A673 (cell line): ENCODE measurements at regions of chr9 and their contacts with region 1.

Region 1: GRCh38 chr9:116149844-116150243 is 3.7 kb upstream of the PAPPA start:
- DNase-seq: peak; percentile 79
- H3K4me3 ChIP-seq: no peak overlapping the region
- H3K27ac ChIP-seq: peak overlapping the region; percentile 39
- H3K4me1 ChIP-seq: peaks cover 74% of the 10 kb centered on the region
- H3K27me3 ChIP-seq: no peaks in the 10 kb centered on the region
- CTCF ChIP-seq: peak; percentile 92

Region 2: GRCh38 chr9:115615821-115616665 is 533.8 kb before region 1 on chr9:
- CTCF ChIA-PET with region 1: no interaction called
- POLR2A ChIA-PET with region 1: no interaction called
- intact Hi-C with region 1: loop called (anchors 5 kb)
- DNase-seq: peak; percentile 55
- H3K4me3 ChIP-seq: no peak overlapping the region
- H3K27ac ChIP-seq: peak overlapping the region; percentile 98
- H3K4me1 ChIP-seq: peaks cover 54% of the 10 kb centered on the region
- H3K27me3 ChIP-seq: no peaks in the 10 kb centered on the region
- CTCF ChIP-seq: no peak

Region 3: DNA sequence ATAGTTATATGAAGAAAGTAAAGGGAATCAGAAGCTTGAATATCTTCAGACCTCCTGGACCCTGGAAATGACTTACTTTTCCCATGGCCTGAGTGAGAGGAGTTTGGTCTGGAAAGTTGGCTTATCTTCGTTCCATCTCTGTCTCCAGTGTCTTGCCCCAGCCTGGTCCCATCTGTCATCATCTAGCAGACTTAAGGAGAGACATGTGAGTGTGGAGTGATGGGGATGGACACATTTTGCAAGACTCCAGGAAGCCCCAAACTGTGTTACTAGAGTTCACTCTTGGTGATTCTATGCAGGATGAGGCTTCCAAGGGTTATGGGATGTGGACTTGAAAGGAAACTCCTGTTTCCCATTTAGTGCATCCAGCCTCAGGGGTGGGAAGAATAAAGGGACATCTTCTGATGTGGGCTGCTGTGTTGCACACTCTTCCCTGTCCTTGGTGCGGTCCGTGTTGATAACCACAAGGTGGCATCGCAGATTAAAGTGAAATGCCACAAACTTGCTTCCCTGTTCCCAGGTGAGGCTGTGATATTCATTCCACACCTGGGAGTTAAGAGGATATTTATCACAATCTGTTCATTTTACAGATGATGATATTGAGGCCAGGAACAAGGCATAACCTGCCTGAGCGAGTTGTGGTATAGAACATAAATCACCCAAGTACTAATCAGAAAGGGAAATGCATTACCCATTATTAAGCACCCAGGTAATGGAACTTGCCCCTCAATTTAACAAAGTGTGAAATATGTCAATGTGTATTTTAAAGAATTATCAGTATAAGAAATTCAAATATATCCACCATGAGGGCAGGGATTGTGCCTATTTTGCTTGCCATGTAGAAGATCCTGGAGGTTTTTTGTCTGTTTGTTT is 266.2 kb before region 1 on chr9:
- CTCF ChIA-PET with region 1: interaction called, 3 read pairs
- POLR2A ChIA-PET with region 1: no interaction called
- intact Hi-C with region 1: loop called (anchors 5 kb)
- DNase-seq: peak; percentile 69
- H3K4me3 ChIP-seq: no peak overlapping the region
- H3K27ac ChIP-seq: peak overlapping the region; percentile 52
- H3K4me1 ChIP-seq: peaks cover 81% of the 10 kb centered on the region
- H3K27me3 ChIP-seq: no peaks in the 10 kb centered on the region
- CTCF ChIP-seq: peak; percentile 87

Region 4: GRCh38 chr9:116365056-116365471 is 215.2 kb after region 1 on chr9:
- CTCF ChIA-PET with region 1: no interaction called
- POLR2A ChIA-PET with region 1: no interaction called
- intact Hi-C with region 1: loop called (anchors 10 kb)
- DNase-seq: peak; percentile 83
- H3K4me3 ChIP-seq: no peak overlapping the region
- H3K27ac ChIP-seq: peak overlapping the region; percentile 66
- H3K4me1 ChIP-seq: peaks cover 21% of the 10 kb centered on the region
- H3K27me3 ChIP-seq: no peaks in the 10 kb centered on the region
- CTCF ChIP-seq: 0 out of 2 replicates have a peak, but pooled peaks have one; percentile 28

Region 5: DNA sequence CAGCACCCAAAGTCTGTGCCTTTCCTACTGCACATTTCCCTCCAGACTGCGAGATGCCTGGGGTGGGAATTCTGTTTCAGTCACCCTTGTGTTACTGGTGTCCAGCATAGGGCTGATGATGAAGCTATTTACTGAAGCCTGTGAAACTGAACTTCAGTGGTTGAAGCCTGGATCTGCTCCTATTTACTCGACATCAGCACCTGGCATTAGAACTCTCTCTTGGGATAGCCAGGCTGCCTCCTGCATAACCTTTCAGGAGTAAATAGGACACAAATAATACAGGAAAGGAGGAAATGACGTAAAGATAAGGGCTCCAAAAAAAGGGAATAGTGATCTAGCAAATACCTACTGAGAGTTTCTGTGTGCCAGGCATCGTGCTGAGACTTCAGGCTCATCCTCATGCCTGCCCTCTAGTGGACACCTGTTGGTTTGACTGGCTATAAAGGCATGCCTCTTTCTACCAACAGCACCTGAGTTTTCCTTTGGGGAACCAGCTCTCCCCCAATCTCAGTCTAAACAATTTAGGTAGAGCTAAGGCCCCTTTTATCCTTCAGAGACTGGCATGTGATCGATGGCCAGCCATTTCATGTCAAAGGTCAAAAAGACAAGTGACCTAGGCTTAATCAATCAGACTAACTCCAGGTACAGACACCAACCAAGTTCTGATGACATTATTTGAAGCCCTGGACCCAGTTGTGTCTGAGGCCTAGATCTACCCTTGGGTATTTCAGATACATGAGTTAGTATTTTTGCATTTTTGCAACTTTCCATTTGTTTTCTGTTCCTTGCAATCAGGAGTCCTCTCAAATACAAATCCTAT is 345.2 kb after region 1 on chr9:
- CTCF ChIA-PET with region 1: no interaction called
- POLR2A ChIA-PET with region 1: no interaction called
- intact Hi-C with region 1: loop called (anchors 5 kb)
- DNase-seq: peak; percentile 44
- H3K4me3 ChIP-seq: no peak overlapping the region
- H3K27ac ChIP-seq: no peak overlapping the region
- H3K4me1 ChIP-seq: peaks cover 6% of the 10 kb centered on the region
- H3K27me3 ChIP-seq: no peaks in the 10 kb centered on the region
- CTCF ChIP-seq: peak; percentile 78

Region 6: DNA sequence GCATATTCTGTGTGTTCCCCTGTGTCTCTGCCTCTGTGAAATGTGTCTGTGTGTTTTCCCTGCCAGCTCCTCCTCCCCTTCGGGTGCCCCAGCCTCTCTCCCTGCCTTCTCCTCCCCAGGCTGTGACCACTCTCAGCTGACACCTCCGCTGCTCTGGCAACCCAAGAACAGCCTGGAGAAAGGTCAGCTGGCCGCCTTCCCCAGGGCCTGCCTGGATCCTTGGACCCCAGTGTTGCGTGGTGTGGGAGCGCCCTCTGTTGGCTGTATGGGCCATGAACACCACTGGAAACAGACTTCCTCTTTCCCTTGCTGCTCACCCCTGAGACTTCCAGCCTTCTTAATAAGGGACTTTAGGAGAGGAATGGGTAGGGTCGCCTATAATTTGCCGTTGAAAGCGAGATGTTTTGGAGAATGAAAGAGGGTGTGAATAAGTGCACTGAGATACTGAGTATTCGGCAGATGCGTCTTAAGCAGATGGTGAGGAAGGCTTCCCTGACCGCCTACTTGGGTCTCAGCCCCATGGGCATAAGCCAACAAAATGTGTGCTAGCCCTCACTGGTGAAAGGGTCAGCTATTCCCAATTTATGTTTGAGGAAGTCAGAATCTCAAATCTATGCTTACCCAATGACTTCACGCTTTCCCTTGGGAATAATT is 422.4 kb after region 1 on chr9:
- CTCF ChIA-PET with region 1: interaction called, 3 read pairs
- POLR2A ChIA-PET with region 1: no interaction called
- intact Hi-C with region 1: loop called (anchors 2 kb)
- DNase-seq: peak; percentile 82
- H3K4me3 ChIP-seq: no peak overlapping the region
- H3K27ac ChIP-seq: peak overlapping the region; percentile 58
- H3K4me1 ChIP-seq: peaks cover 21% of the 10 kb centered on the region
- H3K27me3 ChIP-seq: no peaks in the 10 kb centered on the region
- CTCF ChIP-seq: peak; percentile 99

Region 7: DNA sequence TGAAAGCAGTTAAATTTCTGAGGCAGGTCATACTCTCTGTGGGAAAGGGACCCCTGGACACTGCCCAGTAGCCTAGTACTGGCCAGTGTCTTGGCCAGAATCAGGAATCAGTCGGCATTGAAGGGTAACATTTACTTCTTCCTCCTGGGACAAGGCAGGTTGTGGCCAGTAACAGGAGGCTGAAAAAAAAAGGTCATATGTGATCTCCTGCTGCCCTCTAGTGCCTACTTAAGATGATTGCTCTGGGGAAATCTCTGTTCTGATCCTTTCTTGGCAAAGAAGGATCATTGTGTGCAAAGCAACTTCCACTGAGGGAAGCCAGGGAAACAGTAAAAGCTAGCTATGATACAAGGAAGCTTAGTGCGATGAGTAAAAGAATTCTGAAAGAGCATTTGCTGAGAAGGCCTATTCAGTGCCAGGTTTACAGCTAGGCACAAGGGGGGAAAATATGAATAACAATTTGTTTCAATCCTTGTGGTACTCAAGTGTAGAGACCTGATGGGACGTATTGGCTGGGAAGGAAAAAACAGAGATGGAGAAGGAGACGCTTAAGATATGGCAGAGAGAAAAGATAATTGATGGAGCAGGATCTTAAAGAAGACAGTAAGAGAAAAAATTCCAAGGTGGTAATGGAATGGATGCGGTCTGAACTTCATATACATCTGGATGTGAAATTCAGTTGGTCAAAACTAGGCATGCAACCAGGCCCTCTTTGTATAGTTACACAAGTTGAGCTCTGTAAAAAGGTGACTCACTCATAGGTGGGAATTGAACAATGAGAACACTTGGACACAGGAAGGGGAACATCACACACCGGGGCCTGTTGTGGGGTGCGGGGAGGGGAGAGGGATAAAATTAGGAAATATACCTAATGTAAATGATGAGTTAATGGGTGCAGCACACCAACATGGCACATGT is 511.5 kb after region 1 on chr9:
- CTCF ChIA-PET with region 1: no interaction called
- POLR2A ChIA-PET with region 1: no interaction called
- intact Hi-C with region 1: loop called (anchors 5 kb)
- DNase-seq: peak; percentile 81
- H3K4me3 ChIP-seq: no peak overlapping the region
- H3K27ac ChIP-seq: no peak overlapping the region
- H3K4me1 ChIP-seq: peaks cover 22% of the 10 kb centered on the region
- H3K27me3 ChIP-seq: no peaks in the 10 kb centered on the region
- CTCF ChIP-seq: peak; percentile 86